MCF 10A (cell line): ENCODE measurements at regions of chr12 and their contacts with region 1.

Region 1: GRCh38 chr12:109927622-109928021 is 27.5 kb downstream of the TCHP start:
- DNase-seq: peak; percentile 67
- H3K4me3 Mint-ChIP-seq: no peak overlapping the region
- H3K27ac Mint-ChIP-seq: no peak overlapping the region
- H3K4me1 Mint-ChIP-seq: no peaks in the 10 kb centered on the region
- H3K27me3 Mint-ChIP-seq: no peaks in the 10 kb centered on the region
- CTCF ChIP-seq: peak; percentile 66

Region 2: DNA sequence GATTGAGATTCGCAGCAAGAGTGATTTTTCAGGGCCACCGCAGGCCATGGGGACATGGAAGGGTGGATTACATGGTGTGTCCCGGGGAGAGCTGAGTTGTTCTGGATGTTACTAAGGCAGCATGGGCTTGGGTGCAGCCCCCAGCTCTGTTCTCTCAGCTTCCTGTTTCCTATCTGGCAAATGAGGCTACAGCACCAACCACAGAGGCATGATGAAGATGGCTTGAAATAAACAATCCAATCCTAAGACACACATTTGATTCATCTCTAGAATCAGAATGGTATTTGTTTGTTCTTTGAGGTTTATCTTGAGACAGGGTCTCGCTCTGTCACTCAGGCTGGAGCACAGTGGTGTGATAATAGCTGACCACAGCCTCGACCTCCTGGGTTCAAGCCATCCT is 68.9 kb before region 1 on chr12:
- CTCF ChIA-PET with region 1: interaction called, 21 read pairs
- POLR2A ChIA-PET with region 1: no interaction called
- intact Hi-C with region 1: loop called (anchors 1 kb)
- DNase-seq: no peak
- H3K4me3 Mint-ChIP-seq: no peak overlapping the region
- H3K27ac Mint-ChIP-seq: no peak overlapping the region
- H3K4me1 Mint-ChIP-seq: no peaks in the 10 kb centered on the region
- H3K27me3 Mint-ChIP-seq: no peaks in the 10 kb centered on the region
- CTCF ChIP-seq: no peak

Region 3: GRCh38 chr12:109880016-109880931 is 47.3 kb before region 1 on chr12 and contains the start of gene GLTP:
- CTCF ChIA-PET with region 1: interaction called, 3 read pairs
- POLR2A ChIA-PET with region 1: no interaction called
- intact Hi-C with region 1: loop called (anchors 2 kb)
- DNase-seq: peak; percentile 88
- H3K4me3 Mint-ChIP-seq: peak within 1 kb of the TSS; percentile 96
- H3K27ac Mint-ChIP-seq: peak within 1 kb of the TSS; percentile 82
- H3K4me1 Mint-ChIP-seq: peaks cover 41% of the 10 kb centered on the region
- H3K27me3 Mint-ChIP-seq: no peaks in the 10 kb centered on the region
- CTCF ChIP-seq: peak; percentile 56
- total RNA-seq, gene GLTP: 37.2 and 53.3 TPM in 2 replicates

Region 4: DNA sequence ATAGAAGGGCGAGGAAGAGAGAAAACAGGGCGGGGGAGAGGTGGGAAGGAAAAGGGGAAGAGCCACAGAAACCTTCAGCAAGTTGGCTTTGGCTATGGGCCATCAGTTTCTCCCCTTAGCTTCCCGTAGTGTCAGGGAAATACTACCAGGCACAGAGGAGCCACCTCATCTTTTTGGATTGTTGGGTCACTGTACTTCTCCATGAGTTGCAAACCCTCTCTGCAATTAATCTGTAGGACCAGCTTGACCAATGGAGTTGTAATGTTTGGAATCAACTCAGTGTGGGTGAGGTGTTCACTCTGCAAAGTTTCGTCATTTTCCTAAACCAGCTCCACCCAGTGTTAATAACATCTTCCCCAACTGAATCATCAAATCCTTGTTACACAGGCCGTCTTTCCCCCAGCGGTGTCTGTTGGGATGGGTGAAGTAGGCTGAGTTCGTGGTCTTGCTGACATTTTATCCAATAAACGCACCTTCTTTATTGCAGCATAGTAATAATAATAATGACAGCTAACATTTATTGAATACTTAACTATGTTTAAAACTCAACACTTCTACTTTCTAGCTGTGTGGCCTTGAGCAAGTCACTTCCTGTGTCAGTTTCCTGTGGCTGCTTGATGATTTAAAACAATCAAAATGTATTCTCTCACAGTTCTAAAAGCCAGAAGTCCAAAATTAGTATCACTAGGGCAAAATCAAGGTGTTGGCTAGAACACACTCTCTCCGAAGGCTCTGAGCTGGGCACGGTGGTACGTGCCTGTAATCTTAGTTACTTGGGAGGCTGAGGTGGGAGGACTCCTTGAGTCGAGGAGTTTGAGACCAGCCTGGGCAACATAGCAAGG is 39.2 kb before region 1 on chr12:
- CTCF ChIA-PET with region 1: interaction called, 7 read pairs
- POLR2A ChIA-PET with region 1: no interaction called
- intact Hi-C with region 1: loop called (anchors 2 kb)
- DNase-seq: peak; percentile 94
- H3K4me3 Mint-ChIP-seq: peak overlapping the region; percentile 23
- H3K27ac Mint-ChIP-seq: peak overlapping the region; percentile 97
- H3K4me1 Mint-ChIP-seq: peaks cover 35% of the 10 kb centered on the region
- H3K27me3 Mint-ChIP-seq: no peaks in the 10 kb centered on the region
- CTCF ChIP-seq: peak; percentile 7

Region 5: DNA sequence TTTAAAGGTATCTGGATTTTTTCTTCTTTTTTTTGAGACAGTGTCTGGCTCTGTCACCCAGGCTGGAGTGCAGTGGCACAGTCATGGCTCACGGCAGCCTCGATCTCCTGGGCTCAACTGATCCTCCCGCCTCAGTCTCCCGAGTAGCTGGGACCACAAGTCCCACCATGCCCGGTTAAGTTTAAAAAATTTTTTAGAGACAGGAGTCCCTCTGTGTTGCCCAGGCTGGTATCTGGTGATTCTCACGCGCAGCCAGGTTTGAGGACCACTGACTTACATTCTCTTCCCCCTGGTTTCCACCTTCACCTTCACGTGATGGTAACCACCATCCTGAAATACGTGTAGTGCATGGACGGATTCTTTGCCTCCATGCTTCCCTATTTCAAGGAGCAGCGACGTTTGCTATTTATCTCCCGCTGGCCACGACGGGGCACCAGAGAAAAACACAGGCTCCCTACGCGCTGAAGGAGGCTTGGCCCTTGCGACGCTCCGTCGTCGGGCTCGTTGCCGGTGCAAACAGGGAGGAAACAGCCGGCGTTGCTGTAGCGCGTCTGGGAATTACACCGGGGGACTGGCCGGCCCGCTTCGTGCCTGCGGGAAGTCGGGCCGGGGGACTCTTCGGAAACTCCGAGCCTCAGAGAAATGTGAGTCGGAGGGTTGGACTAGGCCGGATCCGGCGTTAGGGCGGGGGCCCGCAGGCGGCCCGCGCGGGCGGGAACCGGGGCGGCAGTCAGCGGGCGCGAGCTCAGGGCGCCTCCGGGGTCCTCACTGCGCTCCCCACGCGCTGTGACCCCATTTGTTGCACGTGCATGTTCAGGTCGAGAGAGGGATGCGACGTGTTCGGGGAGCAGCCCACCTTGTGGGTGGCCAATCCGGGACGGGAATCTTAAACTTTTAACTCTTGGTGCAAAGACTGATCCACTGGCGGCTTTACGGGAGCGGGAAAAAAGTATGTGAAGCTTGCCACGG is 27.6 kb before region 1 on chr12 and contains the start of gene TCHP:
- CTCF ChIA-PET with region 1: interaction called, 4 read pairs
- POLR2A ChIA-PET with region 1: no interaction called
- intact Hi-C with region 1: loop called (anchors 2 kb)
- DNase-seq: peak; percentile 86
- H3K4me3 Mint-ChIP-seq: peak within 1 kb of the TSS; percentile 98
- H3K27ac Mint-ChIP-seq: peak within 1 kb of the TSS; percentile 97
- H3K4me1 Mint-ChIP-seq: peaks cover 20% of the 10 kb centered on the region
- H3K27me3 Mint-ChIP-seq: no peaks in the 10 kb centered on the region
- CTCF ChIP-seq: peak; percentile 26
- total RNA-seq, gene TCHP: 26.4 and 36.3 TPM in 2 replicates

Region 6: GRCh38 chr12:109915228-109916040 is 12.2 kb before region 1 on chr12:
- CTCF ChIA-PET with region 1: interaction called, 11 read pairs
- POLR2A ChIA-PET with region 1: no interaction called
- intact Hi-C with region 1: no loop called
- DNase-seq: no peak
- H3K4me3 Mint-ChIP-seq: no peak overlapping the region
- H3K27ac Mint-ChIP-seq: no peak overlapping the region
- H3K4me1 Mint-ChIP-seq: no peaks in the 10 kb centered on the region
- H3K27me3 Mint-ChIP-seq: no peaks in the 10 kb centered on the region
- CTCF ChIP-seq: no peak